A673 (cell line): ENCODE measurements at regions of chr3 and their contacts with region 1.

Region 1: DNA sequence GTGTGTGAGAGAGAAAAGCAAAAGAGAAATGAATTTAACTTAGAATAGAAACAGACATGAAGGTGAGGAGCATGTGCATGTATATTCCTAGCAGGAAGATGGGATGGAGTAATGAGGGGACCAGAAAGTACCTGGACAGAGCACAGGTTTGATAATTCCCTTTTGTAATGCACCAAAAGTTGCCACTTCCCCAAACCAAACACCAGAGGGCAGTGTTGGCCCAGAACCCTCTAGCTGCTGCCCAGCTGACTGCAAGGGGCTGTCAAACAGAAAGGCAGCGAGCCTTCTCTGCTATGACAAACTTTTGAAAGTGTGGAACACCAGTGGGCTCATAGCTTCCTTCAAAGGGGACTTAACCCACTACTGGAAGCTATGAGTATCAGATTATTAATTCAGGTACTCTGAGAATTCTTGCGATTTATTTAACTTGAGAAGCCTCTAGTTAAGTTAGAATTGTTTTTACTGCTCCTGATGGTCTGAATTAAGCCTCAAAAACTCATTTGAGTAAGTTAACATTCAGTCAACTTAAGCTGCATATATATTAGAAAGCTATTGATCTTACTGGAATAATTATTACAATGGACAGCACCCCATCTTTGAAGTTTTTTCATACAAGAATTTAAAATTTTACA is 234.9 kb downstream of the NEK10 start:
- DNase-seq: peak; percentile 72
- H3K4me3 ChIP-seq: no peak overlapping the region
- H3K27ac ChIP-seq: no peak overlapping the region
- H3K4me1 ChIP-seq: no peaks in the 10 kb centered on the region
- H3K27me3 ChIP-seq: peaks cover 4% of the 10 kb centered on the region
- CTCF ChIP-seq: peak; percentile 86

Region 2: GRCh38 chr3:27089068-27089467 is 45.2 kb before region 1 on chr3:
- CTCF ChIA-PET with region 1: no interaction called
- POLR2A ChIA-PET with region 1: no interaction called
- intact Hi-C with region 1: no loop called
- DNase-seq: no peak
- H3K4me3 ChIP-seq: no peak overlapping the region
- H3K27ac ChIP-seq: no peak overlapping the region
- H3K4me1 ChIP-seq: no peaks in the 10 kb centered on the region
- H3K27me3 ChIP-seq: no peaks in the 10 kb centered on the region
- CTCF ChIP-seq: no peak

Region 3: DNA sequence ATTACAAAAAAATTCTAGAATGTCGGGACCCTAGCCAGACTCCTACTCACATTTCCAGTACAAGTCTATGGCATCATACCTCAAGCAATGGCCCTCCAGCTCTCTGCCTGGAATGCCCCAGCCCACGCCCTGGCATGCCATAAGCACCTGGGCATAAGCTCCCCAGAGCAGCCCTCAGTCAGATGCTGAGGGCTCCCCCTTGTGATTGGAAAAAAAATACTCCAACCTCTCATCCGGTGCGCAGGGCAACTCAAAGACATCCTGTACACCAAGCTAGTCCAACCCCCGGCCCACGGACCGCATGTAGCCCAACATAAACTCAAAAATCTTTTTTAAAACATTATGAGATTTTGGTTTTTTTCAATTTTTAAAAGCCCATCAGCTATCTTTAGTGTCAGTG is 119.5 kb after region 1 on chr3:
- CTCF ChIA-PET with region 1: interaction called, 16 read pairs
- POLR2A ChIA-PET with region 1: no interaction called
- intact Hi-C with region 1: loop called (anchors 1 kb)
- DNase-seq: peak; percentile 51
- H3K4me3 ChIP-seq: no peak overlapping the region
- H3K27ac ChIP-seq: no peak overlapping the region
- H3K4me1 ChIP-seq: no peaks in the 10 kb centered on the region
- H3K27me3 ChIP-seq: no peaks in the 10 kb centered on the region
- CTCF ChIP-seq: peak; percentile 51

Region 4: DNA sequence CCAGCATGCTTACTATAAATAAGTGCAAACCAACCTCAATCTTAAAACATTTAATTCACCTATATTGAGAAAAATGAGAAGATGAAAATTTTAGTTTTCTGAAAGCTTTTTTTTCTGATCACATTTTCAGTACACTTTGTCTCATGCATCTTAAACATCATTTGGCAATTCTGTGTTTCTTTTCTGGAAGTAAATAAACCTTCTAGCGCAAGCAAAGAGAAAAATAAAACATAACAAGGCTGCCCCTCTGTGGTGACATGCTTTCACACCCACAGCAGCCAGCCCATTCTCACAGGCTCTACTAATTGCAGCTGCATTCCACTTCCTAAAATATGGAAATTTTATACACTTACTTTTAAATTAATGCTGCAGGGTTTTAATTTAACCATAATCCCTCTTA is 144.8 kb after region 1 on chr3:
- CTCF ChIA-PET with region 1: no interaction called
- POLR2A ChIA-PET with region 1: no interaction called
- intact Hi-C with region 1: loop called (anchors 1 kb)
- DNase-seq: peak; percentile 29
- H3K4me3 ChIP-seq: no peak overlapping the region
- H3K27ac ChIP-seq: no peak overlapping the region
- H3K4me1 ChIP-seq: no peaks in the 10 kb centered on the region
- H3K27me3 ChIP-seq: no peaks in the 10 kb centered on the region
- CTCF ChIP-seq: peak; percentile 55; the same call in 1 of the 2 replicates

Region 5: GRCh38 chr3:27368831-27369607 is 234.7 kb after region 1 on chr3 and contains the start of gene NEK10:
- CTCF ChIA-PET with region 1: no interaction called
- POLR2A ChIA-PET with region 1: no interaction called
- intact Hi-C with region 1: no loop called
- DNase-seq: peak; percentile 94
- H3K4me3 ChIP-seq: peak within 1 kb of the TSS; percentile 78
- H3K27ac ChIP-seq: no peak within 1 kb of the TSS
- H3K4me1 ChIP-seq: no peaks in the 10 kb centered on the region
- H3K27me3 ChIP-seq: no peaks in the 10 kb centered on the region
- CTCF ChIP-seq: no peak
- total RNA-seq, gene NEK10: 0.34 and 0.79 TPM in 2 replicates

Region 6: DNA sequence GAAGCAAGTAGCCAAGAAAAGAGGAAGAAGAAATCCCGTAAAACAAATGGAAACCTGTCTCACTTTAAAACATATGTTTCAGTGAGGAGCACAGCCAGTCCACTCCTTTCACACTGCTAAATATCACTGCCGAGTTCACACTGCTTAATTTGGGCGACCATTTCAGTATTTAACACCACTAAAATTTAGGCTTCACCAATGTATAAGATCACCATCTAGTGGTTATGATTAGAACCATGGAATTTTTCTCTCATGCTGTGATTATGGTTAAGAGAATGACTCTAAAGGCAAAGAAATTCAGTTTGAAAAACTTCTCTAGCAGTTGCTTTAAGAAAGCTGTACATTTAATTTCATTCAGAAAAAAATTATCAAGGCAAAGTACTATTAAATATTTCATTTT is 333.3 kb after region 1 on chr3:
- CTCF ChIA-PET with region 1: interaction called, 4 read pairs
- POLR2A ChIA-PET with region 1: no interaction called
- intact Hi-C with region 1: loop called (anchors 10 kb)
- DNase-seq: peak; percentile 78
- H3K4me3 ChIP-seq: no peak overlapping the region
- H3K27ac ChIP-seq: no peak overlapping the region
- H3K4me1 ChIP-seq: peaks cover 4% of the 10 kb centered on the region
- H3K27me3 ChIP-seq: no peaks in the 10 kb centered on the region
- CTCF ChIP-seq: peak; percentile 73